Lower lobe of right lung (tissue), 2 donors: ENCODE measurements at regions of chr22 and their contacts with region 1.

Region 1: DNA sequence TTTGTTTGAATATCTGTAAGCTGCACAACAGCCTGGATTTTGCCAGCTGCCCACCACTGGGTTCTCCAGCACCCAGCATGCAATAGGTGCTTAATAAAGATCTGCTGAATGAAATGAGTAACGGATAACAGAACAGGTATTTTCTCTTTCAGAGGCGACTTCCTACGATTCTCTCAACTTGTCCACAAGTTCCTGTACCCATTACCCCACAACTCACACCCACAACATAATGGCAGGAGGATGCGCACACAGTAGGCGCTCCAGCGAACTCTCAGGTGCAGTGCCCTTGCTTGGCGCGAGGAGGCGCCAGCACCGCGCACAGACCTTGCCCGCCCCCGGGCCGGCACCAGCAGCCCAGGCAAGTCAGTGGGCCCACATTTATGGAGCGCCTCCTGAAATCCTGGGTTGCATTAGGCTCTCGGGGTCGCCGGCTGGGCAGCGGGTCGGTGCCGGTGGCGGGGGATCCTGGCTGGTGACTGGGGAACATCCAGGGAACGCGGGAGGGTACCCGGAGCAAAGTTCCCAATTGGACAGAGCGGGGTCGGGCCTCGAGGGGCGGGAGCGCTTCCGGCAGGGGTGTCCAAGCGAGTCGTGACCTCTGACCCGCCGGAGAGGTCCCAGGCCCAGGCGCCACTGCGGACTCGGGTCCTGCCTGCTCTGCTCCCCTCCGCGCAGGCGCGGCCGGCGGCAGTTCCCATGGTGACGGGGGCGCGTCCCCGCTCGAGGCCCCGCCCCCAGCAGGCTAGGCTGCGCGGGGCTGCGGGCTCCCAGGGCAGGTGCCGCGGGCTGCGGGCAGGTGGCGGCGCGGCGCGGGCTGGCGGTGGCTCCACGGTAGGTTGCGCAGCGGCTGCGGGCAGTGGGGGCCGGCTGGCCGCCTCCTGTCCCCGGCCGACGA is at the start of gene KIAA1671:
- DNase-seq: peak; percentile 87
- ATAC-seq: peak; percentile 97 to 99
- H3K4me3 ChIP-seq: peak within 1 kb of the TSS; percentile 79
- H3K27ac ChIP-seq: peak within 1 kb of the TSS; percentile 79
- H3K4me1 ChIP-seq: peaks cover 24% of the 10 kb centered on the region
- H3K27me3 ChIP-seq: peaks cover 13% of the 10 kb centered on the region
- CTCF ChIP-seq: peak; percentile 96
- total RNA-seq, gene KIAA1671: 40.7 TPM

Region 2: DNA sequence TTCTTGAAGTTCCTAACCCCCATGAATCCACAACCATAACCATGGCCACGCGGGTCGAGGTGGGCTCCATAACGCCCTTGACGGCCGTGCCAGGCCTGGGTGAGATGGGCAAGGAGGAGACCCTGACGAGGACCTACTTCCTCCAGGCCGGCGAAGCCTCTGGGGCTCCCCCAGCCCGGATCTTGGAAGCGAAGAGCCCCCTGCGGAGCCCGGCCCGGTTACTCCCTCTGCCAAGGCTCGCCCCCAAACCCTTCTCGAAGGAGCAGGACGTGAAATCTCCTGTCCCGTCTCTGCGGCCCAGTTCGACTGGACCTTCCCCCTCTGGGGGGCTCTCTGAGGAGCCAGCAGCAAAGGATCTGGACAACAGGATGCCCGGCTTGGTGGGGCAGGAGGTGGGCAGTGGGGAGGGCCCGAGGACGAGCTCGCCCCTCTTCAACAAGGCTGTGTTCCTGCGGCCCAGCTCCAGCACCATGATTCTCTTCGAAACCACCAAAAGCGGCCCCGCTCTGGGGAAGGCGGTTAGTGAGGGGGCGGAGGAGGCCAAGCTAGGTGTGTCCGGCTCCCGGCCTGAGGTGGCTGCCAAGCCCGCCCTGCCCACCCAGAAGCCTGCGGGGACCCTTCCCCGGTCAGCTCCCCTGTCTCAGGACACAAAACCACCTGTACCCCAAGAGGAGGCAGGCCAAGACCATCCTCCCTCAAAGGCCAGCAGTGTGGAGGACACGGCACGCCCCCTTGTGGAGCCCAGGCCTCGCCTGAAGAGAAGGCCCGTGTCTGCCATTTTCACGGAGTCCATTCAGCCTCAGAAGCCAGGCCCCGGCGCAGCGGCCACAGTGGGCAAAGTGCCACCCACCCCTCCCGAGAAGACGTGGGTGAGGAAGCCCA is 76.0 kb after region 1 on chr22:
- intact Hi-C with region 1: loop called (anchors 5 kb)
- DNase-seq: no peak
- ATAC-seq: peak in 1 of 2 donors; percentile 28
- H3K4me3 ChIP-seq: no peak overlapping the region
- H3K27ac ChIP-seq: peak overlapping the region; percentile 49
- H3K4me1 ChIP-seq: peaks cover 25% of the 10 kb centered on the region
- H3K27me3 ChIP-seq: no peaks in the 10 kb centered on the region
- CTCF ChIP-seq: peak; percentile 32

Region 3: GRCh38 chr22:25048659-25049647 is 96.8 kb after region 1 on chr22:
- intact Hi-C with region 1: loop called (anchors 5 kb)
- DNase-seq: peak; percentile 72
- ATAC-seq: peak; percentile 89 to 91
- H3K4me3 ChIP-seq: no peak overlapping the region
- H3K27ac ChIP-seq: no peak overlapping the region
- H3K4me1 ChIP-seq: no peaks in the 10 kb centered on the region
- H3K27me3 ChIP-seq: no peaks in the 10 kb centered on the region
- CTCF ChIP-seq: peak; percentile 88